ENCODE measurements at regions of chr16 and their contacts with region 1.

Region 1: GRCh38 chr16:4501071-4501478 is 24.9 kb downstream of the HMOX2 start:
- DNase-seq: no peak
- ATAC-seq: no peak
- H3K4me3 ChIP-seq: no peak overlapping the region
- H3K4me3 Mint-ChIP-seq: peak overlapping the region in 1 of 3 donors; percentile 72
- H3K27ac ChIP-seq: peak overlapping the region; percentile 56
- H3K27ac Mint-ChIP-seq: peak overlapping the region; percentile 93 to 95
- H3K4me1 ChIP-seq: peaks cover 64 to 70% of the 10 kb centered on the region in 2 experiments
- H3K4me1 Mint-ChIP-seq: peaks cover 88 to 96% (median 88%) of the 10 kb centered on the region in 3 donors
- H3K27me3 ChIP-seq: no peaks in the 10 kb centered on the region
- H3K27me3 Mint-ChIP-seq: no peaks in the 10 kb centered on the region

Region 2: DNA sequence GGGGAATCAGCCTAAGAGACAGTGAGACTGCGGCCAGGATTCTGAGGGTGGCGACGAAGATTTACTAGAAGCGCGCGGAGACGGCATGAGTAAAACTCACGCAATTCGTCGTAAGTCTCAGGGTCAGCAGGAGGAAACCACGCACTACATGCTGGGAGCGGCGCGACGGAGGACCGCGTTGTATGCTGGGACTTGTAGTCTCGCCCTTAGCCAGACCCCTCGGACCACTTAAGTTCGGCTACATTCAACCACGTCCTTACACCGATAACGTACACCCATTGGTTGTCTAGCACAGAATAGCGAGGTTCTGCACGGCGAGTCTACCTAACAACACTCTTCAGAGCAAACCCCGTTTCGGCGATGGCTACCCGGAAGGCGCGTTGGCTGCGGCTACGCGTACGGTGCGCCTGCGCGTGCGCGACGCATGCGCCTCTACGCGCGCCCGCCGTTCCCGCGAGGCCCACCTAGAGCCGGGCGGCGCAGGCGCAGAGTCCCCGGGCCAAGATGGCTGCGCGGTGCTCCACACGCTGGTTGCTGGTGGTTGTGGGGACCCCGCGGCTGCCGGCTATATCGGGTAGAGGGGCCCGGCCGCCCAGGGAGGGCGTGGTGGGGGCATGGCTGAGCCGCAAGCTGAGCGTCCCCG is 75.6 kb before region 1 on chr16 and contains the start of gene DNAJA3:
- CTCF ChIA-PET with region 1: no interaction called
- POLR2A ChIA-PET with region 1: interaction called in 1 of 2 experiments, 10 read pairs
- DNase-seq: peak; percentile 83 to 98 (median 91)
- ATAC-seq: peak; percentile 90 to 93 (median 92)
- H3K4me3 ChIP-seq: peak within 1 kb of the TSS; percentile 73 to 99
- H3K4me3 Mint-ChIP-seq: peak within 1 kb of the TSS; percentile 85 to 89 (median 89)
- H3K27ac ChIP-seq: peak within 1 kb of the TSS; percentile 97
- H3K27ac Mint-ChIP-seq: peak within 1 kb of the TSS; percentile 98 to 100
- H3K4me1 ChIP-seq: peaks cover 19 to 28% of the 10 kb centered on the region in 2 experiments
- H3K4me1 Mint-ChIP-seq: peaks cover 27 to 32% (median 29%) of the 10 kb centered on the region in 3 donors
- H3K27me3 ChIP-seq: no peaks in the 10 kb centered on the region
- H3K27me3 Mint-ChIP-seq: no peaks in the 10 kb centered on the region
- total RNA-seq, gene DNAJA3: 37.7 to 73.8 (median 65.7) TPM

Region 3: GRCh38 chr16:4471869-4472268 is 29.2 kb before region 1 on chr16:
- CTCF ChIA-PET with region 1: interaction called in 1 of 2 experiments, 8 read pairs
- POLR2A ChIA-PET with region 1: interaction called, 5 to 12 read pairs
- DNase-seq: no peak
- ATAC-seq: no peak
- H3K4me3 ChIP-seq: no peak overlapping the region
- H3K4me3 Mint-ChIP-seq: no peak overlapping the region
- H3K27ac ChIP-seq: no peak overlapping the region
- H3K27ac Mint-ChIP-seq: peak overlapping the region; percentile 49 to 84
- H3K4me1 ChIP-seq: peaks cover 12 to 45% of the 10 kb centered on the region in 2 experiments
- H3K4me1 Mint-ChIP-seq: peaks cover 17 to 29% (median 28%) of the 10 kb centered on the region in 3 donors
- H3K27me3 ChIP-seq: no peaks in the 10 kb centered on the region
- H3K27me3 Mint-ChIP-seq: no peaks in the 10 kb centered on the region